K562 (cell line): ENCODE measurements at regions of chr6 and their contacts with region 1.

Region 1: DNA sequence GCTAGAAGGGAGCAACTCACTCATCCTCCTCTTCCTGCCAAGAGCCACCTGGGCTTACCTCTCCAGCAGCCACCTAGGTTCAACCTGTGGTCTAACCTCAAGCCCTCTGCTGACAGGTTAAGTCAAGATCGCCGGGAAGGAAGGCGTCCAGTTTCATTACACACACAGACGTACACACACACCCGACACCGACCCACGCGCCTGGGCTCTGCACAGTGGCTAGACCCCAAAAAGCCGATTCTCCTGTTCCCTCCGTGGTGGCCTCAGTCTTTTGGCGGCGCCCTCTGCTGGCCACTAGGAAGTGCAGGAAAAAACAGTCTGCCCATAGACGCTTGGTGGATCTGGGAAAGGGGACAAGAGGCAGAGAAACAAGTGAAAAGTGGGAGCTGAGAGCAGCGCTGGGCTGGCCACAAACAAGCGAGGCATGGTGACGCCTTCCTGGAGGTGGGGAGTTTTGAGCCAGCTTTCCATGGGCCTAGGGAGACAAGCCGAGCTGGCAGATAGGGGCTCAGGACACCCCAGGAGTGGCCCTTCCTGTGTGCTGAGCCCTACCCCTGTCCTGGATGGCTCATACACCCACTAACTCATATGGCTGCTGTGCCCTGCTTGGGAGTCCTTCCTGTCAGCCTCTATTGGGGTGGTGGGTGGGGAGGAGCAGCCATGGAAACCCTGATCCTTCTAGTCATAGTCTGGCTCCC is 52.7 kb downstream of the MRPL14 start:
- DNase-seq: peak; percentile 80 to 94 (median 84)
- ATAC-seq: peak; percentile 79
- H3K4me3 ChIP-seq: peak overlapping the region; percentile 22; the same call in 1 of the 2 replicates
- H3K27ac ChIP-seq: peak overlapping the region; percentile 80
- H3K4me1 ChIP-seq: peaks cover 53 to 70% of the 10 kb centered on the region in 2 experiments; a peak in 4 of 5 replicates
- H3K27me3 ChIP-seq: no peaks in the 10 kb centered on the region
- CTCF ChIP-seq: peak; percentile 93 to 99 (median 94)
- EP300 ChIP-seq: peak; percentile 36
- POLR2A ChIP-seq: no peak
- RAD21 ChIP-seq: peak; percentile 94 to 95

Region 2: GRCh38 chr6:43608310-43608763 is 466.3 kb before region 1 on chr6:
- CTCF ChIA-PET with region 1: interaction called, 9 read pairs
- POLR2A ChIA-PET with region 1: interaction called, 3 read pairs
- in situ Hi-C with region 1: no loop called
- intact Hi-C with region 1: loop called (anchors 2 kb)
- DNase-seq: peak; percentile 72 to 88 (median 74)
- ATAC-seq: peak; percentile 93
- H3K4me3 ChIP-seq: no peak overlapping the region
- H3K27ac ChIP-seq: no peak overlapping the region; the same call in 2 of the 3 replicates
- H3K4me1 ChIP-seq: peaks cover 3 to 14% of the 10 kb centered on the region in 2 experiments; a peak in 4 of 5 replicates
- H3K27me3 ChIP-seq: no peaks in the 10 kb centered on the region
- CTCF ChIP-seq: peak; percentile 73 to 90 (median 87)
- EP300 ChIP-seq: no peak
- POLR2A ChIP-seq: no peak
- RAD21 ChIP-seq: peak; percentile 75 to 81

Region 3: GRCh38 chr6:43838276-43839036 is 236.1 kb before region 1 on chr6:
- CTCF ChIA-PET with region 1: no interaction called
- POLR2A ChIA-PET with region 1: interaction called, 4 read pairs
- in situ Hi-C with region 1: no loop called
- intact Hi-C with region 1: loop called (anchors 5 kb)
- DNase-seq: peak; percentile 73 to 84 (median 78)
- ATAC-seq: peak; percentile 87
- H3K4me3 ChIP-seq: no peak overlapping the region
- H3K27ac ChIP-seq: peak overlapping the region; percentile 44; the same call in 2 of the 3 replicates
- H3K4me1 ChIP-seq: peaks cover 30 to 38% of the 10 kb centered on the region in 2 experiments
- H3K27me3 ChIP-seq: peaks cover 5 to 12% of the 10 kb centered on the region in 2 experiments; a peak in 4 of 5 replicates
- CTCF ChIP-seq: peak; percentile 73 to 88 (median 81)
- EP300 ChIP-seq: 0 out of 2 replicates have a peak, but pooled peaks have one; percentile 28
- POLR2A ChIP-seq: no peak
- RAD21 ChIP-seq: peak; percentile 66 to 76

Region 4: GRCh38 chr6:43926634-43927524 is 147.7 kb before region 1 on chr6:
- CTCF ChIA-PET with region 1: no interaction called
- POLR2A ChIA-PET with region 1: no interaction called
- in situ Hi-C with region 1: no loop called
- intact Hi-C with region 1: loop called (anchors 1 kb)
- DNase-seq: peak; percentile 84 to 95 (median 88)
- ATAC-seq: peak; percentile 92
- H3K4me3 ChIP-seq: no peak overlapping the region
- H3K27ac ChIP-seq: peak overlapping the region; percentile 93
- H3K4me1 ChIP-seq: peaks cover 31 to 33% of the 10 kb centered on the region in 2 experiments
- H3K27me3 ChIP-seq: no peaks in the 10 kb centered on the region
- CTCF ChIP-seq: 0 out of 6 replicates have a peak, but pooled peaks of 1 of the 3 experiments have one; percentile 12
- EP300 ChIP-seq: peak; percentile 100
- POLR2A ChIP-seq: no peak
- RAD21 ChIP-seq: peak; percentile 63

Region 5: DNA sequence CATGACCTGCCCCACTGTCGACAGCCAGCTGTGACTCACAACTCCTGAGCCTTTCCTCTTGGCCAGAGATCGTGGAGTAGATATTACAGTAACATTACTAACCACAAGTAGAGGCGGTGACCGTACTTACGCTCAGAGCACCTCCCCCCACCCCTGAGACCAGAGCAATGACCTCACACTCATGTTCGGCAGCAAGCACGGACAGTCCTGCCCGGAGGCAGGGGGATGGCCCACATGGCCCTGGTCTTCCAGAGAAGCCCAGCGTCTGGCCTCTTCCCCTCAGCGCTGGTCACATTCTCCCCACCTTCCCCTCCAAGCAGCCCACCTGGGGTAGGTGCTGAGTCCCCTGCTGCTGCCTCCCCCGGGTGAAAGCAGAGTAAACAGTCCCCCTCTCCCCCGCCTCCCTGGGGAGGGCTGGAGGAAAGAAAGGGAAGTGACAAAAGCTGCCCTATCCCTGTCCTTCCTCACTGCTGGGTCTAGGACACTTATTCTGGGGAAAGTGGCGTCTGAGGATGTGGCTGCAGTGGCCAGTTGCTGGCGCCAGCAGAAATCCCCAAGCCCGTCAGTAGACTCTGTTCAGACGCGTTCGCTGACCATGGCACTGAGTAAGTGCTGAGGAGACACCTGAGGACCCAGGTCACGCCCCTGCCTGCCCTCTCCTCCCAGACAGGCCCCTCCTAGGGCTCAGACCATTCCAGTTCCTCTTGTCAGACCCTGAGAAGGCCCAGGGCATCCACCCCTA is 15.8 kb before region 1 on chr6:
- CTCF ChIA-PET with region 1: no interaction called
- POLR2A ChIA-PET with region 1: interaction called, 6 read pairs
- in situ Hi-C with region 1: no loop called
- intact Hi-C with region 1: loop called (anchors 2 kb)
- DNase-seq: peak; percentile 96 to 99 (median 98)
- ATAC-seq: peak; percentile 93
- H3K4me3 ChIP-seq: peak overlapping the region; percentile 21; the same call in 1 of the 2 replicates
- H3K27ac ChIP-seq: peak overlapping the region; percentile 97
- H3K4me1 ChIP-seq: peaks cover 52 to 63% of the 10 kb centered on the region in 2 experiments
- H3K27me3 ChIP-seq: no peaks in the 10 kb centered on the region
- CTCF ChIP-seq: peak in 1 of 3 experiments; percentile 19; a peak in 2 of 6 replicates
- EP300 ChIP-seq: peak; percentile 92
- POLR2A ChIP-seq: peak; percentile 87
- RAD21 ChIP-seq: peak; percentile 10 to 40; a peak in 1 of 4 replicates